ENCODE measurements at regions of chr18 and their contacts with region 1.

Region 1: DNA sequence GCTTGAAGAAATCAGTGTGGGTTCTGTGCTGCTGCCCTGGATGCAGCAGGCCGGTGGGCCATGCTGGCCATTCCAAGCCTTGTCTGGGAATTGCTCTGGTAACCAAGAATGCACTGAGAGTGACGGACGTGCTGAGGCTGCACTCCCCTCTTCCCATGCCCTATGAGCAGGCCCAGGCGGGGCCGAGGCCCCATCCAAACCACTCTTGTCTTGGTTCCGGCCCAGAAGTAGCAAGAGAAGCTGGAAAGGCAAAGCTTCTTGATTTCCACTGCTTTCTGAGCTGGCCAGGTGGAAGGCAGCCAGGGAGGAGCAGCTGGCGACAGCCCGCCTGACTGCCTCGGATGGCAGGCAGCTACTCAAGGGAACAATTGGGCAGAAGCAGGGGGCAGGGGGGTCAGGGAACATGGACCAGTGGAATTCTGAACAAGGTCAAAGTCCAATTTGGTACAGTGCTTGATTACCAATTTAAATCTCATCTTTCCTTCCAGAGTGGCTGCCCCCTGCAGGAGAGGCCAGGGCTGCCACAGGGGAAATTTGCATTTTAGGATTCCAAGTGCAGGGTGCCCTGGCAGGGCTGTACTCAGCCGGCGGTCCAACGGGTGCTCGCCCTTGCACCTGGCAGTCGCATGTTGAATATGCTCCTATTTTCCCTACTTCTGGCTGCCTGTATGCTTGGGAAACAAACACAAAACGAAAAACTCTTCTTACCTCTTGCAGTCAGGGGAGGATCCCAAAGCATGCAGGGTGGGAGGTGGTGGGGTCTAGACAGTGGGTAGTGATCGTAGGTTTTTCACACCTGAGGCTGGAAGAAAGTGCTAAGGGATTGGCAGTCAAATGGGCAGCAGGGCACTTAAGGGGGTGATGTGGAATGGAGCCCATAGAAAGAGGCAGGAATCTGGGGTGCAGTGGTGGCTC is 67.3 kb downstream of the LIPG start:
- DNase-seq: no peak
- H3K4me3 ChIP-seq: no peak overlapping the region
- H3K27ac ChIP-seq: no peak overlapping the region
- H3K4me1 ChIP-seq: no peaks in the 10 kb centered on the region
- H3K27me3 ChIP-seq: peaks cover 0 to 5% of the 10 kb centered on the region in 2 donors
- CTCF ChIP-seq: no peak

Region 2: DNA sequence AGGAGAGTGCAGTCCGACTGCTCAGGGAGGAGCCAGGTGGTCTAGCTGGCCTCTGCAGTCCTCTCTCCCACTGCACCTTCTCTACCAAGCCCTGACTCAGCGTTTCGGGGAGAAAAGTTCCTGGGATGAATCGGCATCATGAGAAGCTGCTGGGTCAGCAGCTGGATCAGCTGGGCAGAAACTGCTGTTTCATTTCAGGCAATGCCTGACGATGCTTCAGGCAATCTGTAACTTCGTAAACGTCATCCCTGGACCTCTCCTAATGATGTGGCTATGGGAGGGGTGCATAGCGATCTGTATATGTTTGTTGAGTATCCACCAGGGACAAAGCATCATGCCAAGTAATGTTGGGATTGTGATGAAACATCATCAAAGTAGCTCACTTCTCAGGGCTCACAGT is 46.6 kb before region 1 on chr18:
- intact Hi-C with region 1: no loop called
- DNase-seq: no peak
- H3K4me3 ChIP-seq: no peak overlapping the region
- H3K27ac ChIP-seq: no peak overlapping the region
- H3K4me1 ChIP-seq: no peaks in the 10 kb centered on the region
- H3K27me3 ChIP-seq: peaks cover 0 to 6% of the 10 kb centered on the region in 2 donors
- CTCF ChIP-seq: no peak

Region 3: GRCh38 chr18:49747876-49748275 is 118.7 kb after region 1 on chr18:
- intact Hi-C with region 1: loop called (anchors 10 kb)
- DNase-seq: no peak
- H3K4me3 ChIP-seq: no peak overlapping the region
- H3K27ac ChIP-seq: no peak overlapping the region
- H3K4me1 ChIP-seq: no peaks in the 10 kb centered on the region
- H3K27me3 ChIP-seq: peaks cover 0 to 5% of the 10 kb centered on the region in 2 donors
- CTCF ChIP-seq: no peak

Region 4: DNA sequence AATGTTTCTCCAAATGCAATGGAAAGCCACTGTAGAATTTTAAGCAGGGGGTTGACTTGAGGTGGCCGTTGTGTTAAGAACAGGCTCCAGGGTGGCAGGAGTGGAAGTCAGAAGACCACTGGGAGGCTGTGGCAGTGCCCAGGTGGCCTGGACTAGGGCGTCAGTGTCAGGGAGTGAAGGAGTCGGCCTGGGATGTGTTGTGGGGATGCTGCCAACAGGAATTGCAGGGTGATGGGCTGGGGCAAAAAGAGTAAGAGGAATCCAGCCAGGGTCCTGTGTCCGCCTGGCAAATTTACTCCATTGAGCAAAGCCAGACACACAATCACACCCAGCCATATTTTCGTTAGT is 129.1 kb after region 1 on chr18:
- intact Hi-C with region 1: no loop called
- DNase-seq: no peak
- H3K4me3 ChIP-seq: no peak overlapping the region
- H3K27ac ChIP-seq: no peak overlapping the region
- H3K4me1 ChIP-seq: no peaks in the 10 kb centered on the region
- H3K27me3 ChIP-seq: peaks cover 0 to 4% of the 10 kb centered on the region in 2 donors
- CTCF ChIP-seq: no peak

Measured in tibial artery (tissue), 4 donors.